ENCODE measurements at regions of chr2 and their contacts with region 1.

Region 1: DNA sequence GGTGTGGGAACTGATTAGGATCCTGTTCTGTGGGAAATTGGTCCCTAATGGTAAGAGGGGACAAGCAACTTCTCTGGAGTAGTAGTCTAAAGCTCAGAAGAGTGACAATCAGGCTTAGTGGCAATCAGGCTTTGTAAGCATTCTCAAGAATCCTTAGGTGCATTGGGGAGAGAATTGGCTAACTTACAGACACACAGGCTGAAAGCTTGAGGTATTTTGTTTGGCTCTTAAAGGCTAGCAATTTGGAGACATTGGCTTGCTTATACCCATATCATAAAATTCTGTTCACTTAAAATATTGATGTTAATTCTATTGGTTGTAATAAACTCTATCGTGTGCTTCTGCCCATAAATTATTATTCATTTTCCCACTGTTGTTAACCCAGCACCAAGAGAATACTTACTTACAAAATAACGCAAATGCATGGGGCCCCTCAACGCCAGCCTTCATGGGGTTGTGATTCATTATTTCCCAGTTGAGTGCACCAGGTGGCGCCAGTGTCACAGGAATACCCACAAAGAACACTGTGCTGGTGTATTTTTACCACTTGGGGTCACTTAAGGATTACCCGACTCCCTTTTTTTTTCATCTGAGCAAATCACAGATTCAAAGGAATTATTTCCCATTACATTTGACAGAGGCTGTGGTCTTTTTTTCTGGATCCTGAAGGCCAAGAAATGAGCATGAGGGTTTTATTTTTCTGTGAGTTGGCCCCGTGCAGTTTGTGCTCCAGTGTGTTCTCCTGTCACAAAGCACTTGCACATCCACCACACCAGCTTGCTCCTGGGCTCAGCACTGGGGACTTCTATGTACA is 45.5 kb downstream of the DDX1 start:
- DNase-seq: peak; percentile 74 to 83 (median 78)
- ATAC-seq: peak; percentile 97
- H3K4me3 ChIP-seq: no peak overlapping the region
- H3K27ac ChIP-seq: no peak overlapping the region
- H3K4me1 ChIP-seq: no peaks in the 10 kb centered on the region; a peak in 1 of 5 replicates
- H3K27me3 ChIP-seq: no peaks in the 10 kb centered on the region
- CTCF ChIP-seq: peak; percentile 90 to 99 (median 99)
- EP300 ChIP-seq: no peak
- POLR2A ChIP-seq: no peak
- RAD21 ChIP-seq: peak; percentile 90 to 94

Region 2: GRCh38 chr2:15673927-15674636 is 36.9 kb after region 1 on chr2:
- CTCF ChIA-PET with region 1: no interaction called
- POLR2A ChIA-PET with region 1: no interaction called
- in situ Hi-C with region 1: no loop called
- intact Hi-C with region 1: no loop called
- DNase-seq: no peak
- ATAC-seq: peak; percentile 20; the same call in 2 of the 3 replicates
- H3K4me3 ChIP-seq: no peak overlapping the region
- H3K27ac ChIP-seq: no peak overlapping the region
- H3K4me1 ChIP-seq: no peaks in the 10 kb centered on the region
- H3K27me3 ChIP-seq: peaks cover 17 to 59% of the 10 kb centered on the region in 2 experiments
- CTCF ChIP-seq: no peak
- EP300 ChIP-seq: no peak
- POLR2A ChIP-seq: no peak
- RAD21 ChIP-seq: no peak

Region 3: GRCh38 chr2:15748736-15749323 is 111.7 kb after region 1 on chr2:
- CTCF ChIA-PET with region 1: interaction called, 18 read pairs
- POLR2A ChIA-PET with region 1: no interaction called
- in situ Hi-C with region 1: loop called (anchors 5 kb)
- intact Hi-C with region 1: loop called (anchors 1 kb)
- DNase-seq: peak; percentile 73 to 79 (median 78)
- ATAC-seq: peak; percentile 97
- H3K4me3 ChIP-seq: no peak overlapping the region
- H3K27ac ChIP-seq: no peak overlapping the region
- H3K4me1 ChIP-seq: no peaks in the 10 kb centered on the region
- H3K27me3 ChIP-seq: peaks cover 6 to 30% of the 10 kb centered on the region in 2 experiments
- CTCF ChIP-seq: peak; percentile 79 to 88 (median 87)
- EP300 ChIP-seq: no peak
- POLR2A ChIP-seq: no peak
- RAD21 ChIP-seq: peak; percentile 39 to 69

Region 4: GRCh38 chr2:16281451-16282336 is 644.5 kb after region 1 on chr2:
- CTCF ChIA-PET with region 1: no interaction called
- POLR2A ChIA-PET with region 1: no interaction called
- in situ Hi-C with region 1: no loop called
- intact Hi-C with region 1: loop called (anchors 5 kb)
- DNase-seq: peak; percentile 27 to 42 (median 40)
- ATAC-seq: peak; percentile 96
- H3K4me3 ChIP-seq: no peak overlapping the region
- H3K27ac ChIP-seq: no peak overlapping the region
- H3K4me1 ChIP-seq: no peaks in the 10 kb centered on the region
- H3K27me3 ChIP-seq: peaks cover 5 to 20% of the 10 kb centered on the region in 2 experiments; a peak in 2 of 5 replicates
- CTCF ChIP-seq: peak; percentile 31 to 56 (median 48); a peak in 5 of 6 replicates
- EP300 ChIP-seq: no peak
- POLR2A ChIP-seq: no peak
- RAD21 ChIP-seq: peak; percentile 36 to 57; a peak in 3 of 4 replicates

Region 5: DNA sequence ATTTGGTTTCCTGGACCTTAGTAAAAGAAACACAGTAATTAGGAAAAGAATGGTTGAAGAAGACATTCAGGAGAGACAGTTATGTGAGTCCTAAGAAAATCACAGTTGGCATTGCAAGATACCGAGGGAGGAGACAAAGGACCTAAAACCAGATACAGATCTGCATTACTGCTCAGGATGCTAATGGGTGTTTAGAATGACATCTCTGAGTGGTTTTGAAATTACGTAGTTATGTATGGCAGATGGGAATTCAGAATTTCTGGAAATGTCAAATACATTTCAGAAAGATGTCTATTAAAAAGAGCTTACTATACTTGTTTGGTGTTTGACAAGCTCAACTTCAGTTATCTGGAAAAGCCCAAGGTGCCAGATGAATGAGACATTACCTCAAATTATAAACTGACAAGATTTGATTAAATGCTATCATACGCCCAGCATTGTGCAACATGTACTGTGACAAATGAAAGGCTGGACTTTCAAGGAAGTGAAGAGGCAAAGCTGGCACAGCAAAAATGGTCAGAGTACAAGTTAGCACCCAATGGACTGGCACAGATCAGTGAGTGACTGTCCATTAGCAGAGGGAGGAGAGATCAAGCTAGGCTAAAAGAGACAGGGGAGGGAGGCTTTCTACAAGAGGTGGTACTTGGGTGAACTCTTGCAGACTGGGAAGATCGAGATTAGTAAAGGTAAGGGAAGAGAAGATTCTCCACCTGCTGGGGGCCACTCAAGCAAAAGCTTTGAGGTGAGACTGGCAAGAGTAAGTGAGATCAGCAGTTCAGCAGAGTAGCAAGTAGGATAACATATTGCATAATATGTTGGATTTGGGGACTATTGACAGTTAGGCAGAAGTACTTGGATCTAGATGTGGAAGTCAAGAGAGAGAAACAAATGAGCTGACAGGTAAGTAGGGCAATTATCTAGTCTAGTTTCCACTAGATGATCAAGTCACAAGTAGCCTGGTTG is 859.5 kb after region 1 on chr2:
- CTCF ChIA-PET with region 1: no interaction called
- POLR2A ChIA-PET with region 1: no interaction called
- in situ Hi-C with region 1: loop called (anchors 10 kb)
- intact Hi-C with region 1: no loop called
- DNase-seq: no peak
- ATAC-seq: no peak
- H3K4me3 ChIP-seq: no peak overlapping the region
- H3K27ac ChIP-seq: no peak overlapping the region
- H3K4me1 ChIP-seq: no peaks in the 10 kb centered on the region
- H3K27me3 ChIP-seq: no peaks in the 10 kb centered on the region
- CTCF ChIP-seq: no peak
- EP300 ChIP-seq: no peak
- POLR2A ChIP-seq: no peak
- RAD21 ChIP-seq: no peak

Measured in K562 (cell line).